Panc1 (cell line): ENCODE measurements at regions of chr5 and their contacts with region 1.

Region 1: GRCh38 chr5:66915531-66915930 is 281.1 kb downstream of the CD180 start:
- DNase-seq: no peak
- ATAC-seq: no peak
- H3K4me3 ChIP-seq: no peak overlapping the region
- H3K27ac ChIP-seq: no peak overlapping the region
- H3K4me1 ChIP-seq: no peaks in the 10 kb centered on the region
- H3K27me3 ChIP-seq: no peaks in the 10 kb centered on the region
- CTCF ChIP-seq: no peak

Region 2: DNA sequence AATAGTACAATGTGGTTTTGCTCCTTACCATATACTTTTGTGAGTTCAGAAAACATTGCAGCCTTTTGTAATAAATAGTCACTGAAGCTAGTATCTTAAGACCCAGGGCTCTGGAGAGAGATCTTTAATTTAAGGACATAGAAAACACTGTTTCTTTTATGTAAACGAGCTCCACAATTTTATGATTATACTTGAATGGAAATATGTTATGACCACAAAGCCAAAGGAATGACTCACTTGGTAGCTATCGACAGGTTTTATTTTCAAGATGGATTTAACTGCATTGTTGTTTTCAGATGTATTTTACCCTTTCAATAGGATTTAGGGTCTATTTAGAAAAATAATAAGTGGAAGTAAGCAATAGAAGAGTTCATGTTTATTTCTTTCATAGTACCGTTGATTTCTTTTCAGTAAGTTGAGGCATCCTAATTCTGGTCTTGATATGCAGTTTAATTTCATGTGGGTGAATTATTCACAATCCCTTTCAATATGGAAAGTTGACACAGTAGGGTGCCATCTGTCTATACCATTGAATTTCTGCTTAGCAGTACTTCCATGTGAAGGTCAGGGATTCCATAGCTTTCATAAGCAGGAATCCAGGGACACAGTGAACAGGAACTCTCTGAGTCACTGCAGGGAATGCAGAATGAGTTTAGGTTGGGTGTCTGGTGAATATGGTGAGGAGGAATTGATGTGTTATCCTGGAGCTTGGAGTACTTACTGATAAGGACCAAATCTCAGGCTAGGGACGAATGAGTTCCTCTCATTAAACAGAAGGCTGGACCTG is 123.5 kb after region 1 on chr5:
- CTCF ChIA-PET with region 1: interaction called, 12 read pairs
- POLR2A ChIA-PET with region 1: no interaction called
- in situ Hi-C with region 1: no loop called
- intact Hi-C with region 1: no loop called
- DNase-seq: no peak
- ATAC-seq: peak; percentile 56; the same call in 1 of the 2 replicates
- H3K4me3 ChIP-seq: no peak overlapping the region
- H3K27ac ChIP-seq: no peak overlapping the region
- H3K4me1 ChIP-seq: no peaks in the 10 kb centered on the region
- H3K27me3 ChIP-seq: no peaks in the 10 kb centered on the region
- CTCF ChIP-seq: no peak